Calu3 (cell line): ENCODE measurements at regions of chr15 and their contacts with region 1.

Region 1: GRCh38 chr15:91947683-91948608 is 94.4 kb downstream of the SLCO3A1 start:
- DNase-seq: peak; percentile 68
- H3K4me3 Mint-ChIP-seq: peak overlapping the region; percentile 49
- H3K27ac Mint-ChIP-seq: peak overlapping the region; percentile 90
- H3K4me1 Mint-ChIP-seq: peaks cover 100% of the 10 kb centered on the region
- H3K27me3 Mint-ChIP-seq: no peaks in the 10 kb centered on the region
- CTCF ChIP-seq: no peak

Region 2: GRCh38 chr15:92069308-92070250 is 121.6 kb after region 1 on chr15:
- CTCF ChIA-PET with region 1: interaction called, 5 read pairs
- intact Hi-C with region 1: loop called (anchors 2 kb)
- DNase-seq: peak; percentile 86
- H3K4me3 Mint-ChIP-seq: peak overlapping the region; percentile 45
- H3K27ac Mint-ChIP-seq: peak overlapping the region; percentile 90
- H3K4me1 Mint-ChIP-seq: peaks cover 63% of the 10 kb centered on the region
- H3K27me3 Mint-ChIP-seq: no peaks in the 10 kb centered on the region
- CTCF ChIP-seq: no peak